ENCODE measurements at regions of chr16 and their contacts with region 1.

Region 1: GRCh38 chr16:80824718-80825364 is 20.4 kb upstream of the CDYL2 start:
- DNase-seq: peak; percentile 68
- ATAC-seq: peak; percentile 53
- H3K4me3 Mint-ChIP-seq: no peak overlapping the region
- H3K27ac Mint-ChIP-seq: no peak overlapping the region
- H3K4me1 Mint-ChIP-seq: no peaks in the 10 kb centered on the region
- H3K27me3 Mint-ChIP-seq: peaks cover 3% of the 10 kb centered on the region
- CTCF ChIP-seq: peak; percentile 86

Region 2: GRCh38 chr16:80778707-80779106 is 46.1 kb before region 1 on chr16:
- CTCF ChIA-PET with region 1: no interaction called
- POLR2A ChIA-PET with region 1: no interaction called
- intact Hi-C with region 1: no loop called
- DNase-seq: no peak
- ATAC-seq: no peak
- H3K4me3 Mint-ChIP-seq: no peak overlapping the region
- H3K27ac Mint-ChIP-seq: no peak overlapping the region
- H3K4me1 Mint-ChIP-seq: peaks cover 4% of the 10 kb centered on the region
- H3K27me3 Mint-ChIP-seq: no peaks in the 10 kb centered on the region
- CTCF ChIP-seq: no peak

Region 3: GRCh38 chr16:80837421-80838231 is 12.8 kb after region 1 on chr16:
- CTCF ChIA-PET with region 1: interaction called, 15 read pairs
- POLR2A ChIA-PET with region 1: interaction called, 3 read pairs
- intact Hi-C with region 1: no loop called
- DNase-seq: no peak
- ATAC-seq: no peak
- H3K4me3 Mint-ChIP-seq: no peak overlapping the region
- H3K27ac Mint-ChIP-seq: no peak overlapping the region
- H3K4me1 Mint-ChIP-seq: no peaks in the 10 kb centered on the region
- H3K27me3 Mint-ChIP-seq: peaks cover 21% of the 10 kb centered on the region
- CTCF ChIP-seq: no peak

Region 4: DNA sequence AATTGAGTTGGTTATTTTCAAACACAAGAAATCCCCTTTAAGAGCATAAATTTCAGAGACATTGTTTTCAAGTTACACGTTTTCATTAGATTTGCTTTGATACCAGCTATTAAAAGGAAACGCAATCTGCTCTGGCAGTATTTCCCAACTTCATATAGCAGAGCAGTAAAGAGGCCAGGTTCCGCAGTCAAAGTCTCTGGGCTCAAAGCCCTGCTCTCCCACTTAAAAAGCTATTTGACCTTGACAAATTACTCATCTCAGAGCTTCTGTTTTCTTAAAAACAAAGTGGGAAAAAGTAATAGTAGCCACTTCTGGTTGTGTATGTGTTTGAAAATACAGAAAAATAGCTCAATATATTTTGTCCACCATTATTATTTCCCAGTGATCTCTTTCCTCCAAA is 69.2 kb after region 1 on chr16:
- CTCF ChIA-PET with region 1: no interaction called
- POLR2A ChIA-PET with region 1: no interaction called
- intact Hi-C with region 1: no loop called
- DNase-seq: no peak
- ATAC-seq: no peak
- H3K4me3 Mint-ChIP-seq: no peak overlapping the region
- H3K27ac Mint-ChIP-seq: no peak overlapping the region
- H3K4me1 Mint-ChIP-seq: no peaks in the 10 kb centered on the region
- H3K27me3 Mint-ChIP-seq: peaks cover 2% of the 10 kb centered on the region
- CTCF ChIP-seq: no peak

Region 5: GRCh38 chr16:80964351-80964750 is 139.5 kb after region 1 on chr16:
- CTCF ChIA-PET with region 1: no interaction called
- POLR2A ChIA-PET with region 1: no interaction called
- intact Hi-C with region 1: no loop called
- DNase-seq: no peak
- ATAC-seq: no peak
- H3K4me3 Mint-ChIP-seq: no peak overlapping the region
- H3K27ac Mint-ChIP-seq: no peak overlapping the region
- H3K4me1 Mint-ChIP-seq: peaks cover 2% of the 10 kb centered on the region
- H3K27me3 Mint-ChIP-seq: no peaks in the 10 kb centered on the region
- CTCF ChIP-seq: no peak

Region 6: GRCh38 chr16:80974649-80975376 is 150.0 kb after region 1 on chr16:
- CTCF ChIA-PET with region 1: no interaction called
- POLR2A ChIA-PET with region 1: no interaction called
- intact Hi-C with region 1: no loop called
- DNase-seq: no peak
- ATAC-seq: no peak
- H3K4me3 Mint-ChIP-seq: no peak overlapping the region
- H3K27ac Mint-ChIP-seq: no peak overlapping the region
- H3K4me1 Mint-ChIP-seq: peaks cover 4% of the 10 kb centered on the region
- H3K27me3 Mint-ChIP-seq: no peaks in the 10 kb centered on the region
- CTCF ChIP-seq: peak; percentile 53

Measured in activated CD8-positive, alpha-beta T cell treated with anti-CD3 and anti-CD28 coated beads for 36 hours (primary cell).